HEK293 (cell line): ENCODE measurements at regions of chr17 and their contacts with region 1.

Region 1: GRCh38 chr17:81034779-81035388 is at the start of gene BAIAP2:
- H3K4me3 ChIP-seq: peak within 1 kb of the TSS; percentile 75
- H3K27ac ChIP-seq: peak within 1 kb of the TSS; percentile 58; the same call in 1 of the 2 replicates
- H3K4me1 ChIP-seq: peaks cover 4% of the 10 kb centered on the region; the same call in 1 of the 2 replicates
- CTCF ChIP-seq: peak; percentile 47; the same call in 1 of the 2 replicates

Region 2: GRCh38 chr17:81049973-81050551 is 15.2 kb after region 1 on chr17:
- CTCF ChIA-PET with region 1: interaction called, 8 read pairs
- POLR2A ChIA-PET with region 1: interaction called, 23 read pairs
- H3K4me3 ChIP-seq: peak overlapping the region; percentile 6
- H3K27ac ChIP-seq: no peak overlapping the region
- H3K4me1 ChIP-seq: peaks cover 9% of the 10 kb centered on the region
- CTCF ChIP-seq: no peak